ENCODE measurements at regions of chr19 and their contacts with region 1.

Region 1: DNA sequence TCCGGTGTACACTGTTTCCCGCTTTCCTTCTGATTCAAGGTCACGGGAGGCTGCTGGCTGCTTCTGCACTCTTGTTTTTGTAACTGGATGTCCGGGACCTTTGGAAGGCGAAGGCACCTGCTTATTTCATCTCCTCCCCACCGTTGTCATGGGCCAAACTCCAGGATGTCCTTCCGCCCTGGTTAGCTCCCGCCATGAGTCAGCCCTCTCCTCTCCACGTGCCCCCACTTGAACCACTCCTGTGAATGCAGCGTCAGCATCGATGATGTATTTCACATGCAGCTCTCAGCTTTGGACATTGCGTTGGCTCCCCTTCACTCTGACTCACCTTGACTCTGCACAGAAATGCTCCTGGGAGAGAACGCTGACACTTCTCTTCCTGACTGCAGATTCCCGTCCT is 5.5 kb upstream of the GALP start:
- DNase-seq: no peak
- ATAC-seq: no peak
- H3K4me3 ChIP-seq: no peak overlapping the region
- H3K4me3 Mint-ChIP-seq: no peak overlapping the region
- H3K27ac ChIP-seq: no peak overlapping the region
- H3K27ac Mint-ChIP-seq: no peak overlapping the region
- H3K4me1 ChIP-seq: peaks cover 5% of the 10 kb centered on the region
- H3K4me1 Mint-ChIP-seq: peaks cover 0 to 6% of the 10 kb centered on the region in 2 donors
- H3K27me3 ChIP-seq: no peaks in the 10 kb centered on the region
- H3K27me3 Mint-ChIP-seq: peaks cover 4 to 6% of the 10 kb centered on the region in 2 donors
- CTCF ChIP-seq: no peak

Region 2: DNA sequence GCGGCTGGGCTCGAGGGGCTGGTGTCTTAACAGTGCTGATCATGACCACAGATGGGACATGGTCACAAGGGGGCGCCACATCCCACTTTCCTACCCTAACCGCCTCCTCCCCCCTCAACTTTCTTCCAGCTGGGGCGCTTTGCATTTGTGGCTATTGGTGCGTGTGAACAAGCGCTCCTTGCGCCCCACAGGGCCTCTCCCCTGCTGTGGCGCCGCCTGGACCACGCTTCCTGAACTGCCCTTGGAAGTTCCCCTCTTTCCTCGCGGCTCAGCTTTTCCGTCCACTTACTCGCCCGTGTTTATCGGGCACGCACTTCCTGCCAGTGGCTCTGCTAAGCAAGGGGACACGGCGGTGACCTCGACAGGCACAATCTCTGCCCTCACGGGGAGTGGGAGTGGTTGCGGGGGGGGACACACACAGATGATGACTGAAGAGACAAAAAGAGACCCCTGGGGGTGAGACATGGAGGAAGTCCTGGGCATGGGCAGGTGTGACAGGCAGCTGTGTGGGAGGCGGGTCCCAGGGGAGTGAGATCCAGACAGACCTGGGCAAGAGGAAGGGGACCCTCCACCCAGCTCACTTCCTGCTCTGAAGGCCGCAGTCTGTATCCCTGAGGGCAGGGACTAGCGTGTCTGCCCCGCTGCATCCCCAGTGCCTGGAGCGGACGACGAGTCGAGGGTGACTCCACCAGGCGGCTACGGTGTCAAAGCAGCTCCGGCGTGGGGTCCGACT is 89.4 kb before region 1 on chr19:
- intact Hi-C with region 1: loop called (anchors 2 kb)
- DNase-seq: peak; percentile 58 to 81
- ATAC-seq: peak; percentile 70 to 80 (median 77)
- H3K4me3 ChIP-seq: peak overlapping the region; percentile 41
- H3K4me3 Mint-ChIP-seq: peak overlapping the region; percentile 79
- H3K27ac ChIP-seq: no peak overlapping the region
- H3K27ac Mint-ChIP-seq: peak overlapping the region in 1 of 2 donors; percentile 86
- H3K4me1 ChIP-seq: peaks cover 12% of the 10 kb centered on the region
- H3K4me1 Mint-ChIP-seq: peaks cover 10 to 12% of the 10 kb centered on the region in 2 donors
- H3K27me3 ChIP-seq: no peaks in the 10 kb centered on the region
- H3K27me3 Mint-ChIP-seq: peaks cover 0 to 5% of the 10 kb centered on the region in 2 donors
- CTCF ChIP-seq: peak; percentile 19

Region 3: GRCh38 chr19:56105090-56105701 is 65.1 kb before region 1 on chr19:
- intact Hi-C with region 1: loop called (anchors 10 kb)
- DNase-seq: peak; percentile 40 to 74
- ATAC-seq: peak; percentile 70 to 86 (median 82)
- H3K4me3 ChIP-seq: no peak overlapping the region
- H3K4me3 Mint-ChIP-seq: peak overlapping the region; percentile 6
- H3K27ac ChIP-seq: no peak overlapping the region
- H3K27ac Mint-ChIP-seq: peak overlapping the region; percentile 53 to 75
- H3K4me1 ChIP-seq: peaks cover 45% of the 10 kb centered on the region
- H3K4me1 Mint-ChIP-seq: peaks cover 21 to 51% of the 10 kb centered on the region in 2 donors
- H3K27me3 ChIP-seq: no peaks in the 10 kb centered on the region
- H3K27me3 Mint-ChIP-seq: no peaks in the 10 kb centered on the region
- CTCF ChIP-seq: peak; percentile 68

Region 4: DNA sequence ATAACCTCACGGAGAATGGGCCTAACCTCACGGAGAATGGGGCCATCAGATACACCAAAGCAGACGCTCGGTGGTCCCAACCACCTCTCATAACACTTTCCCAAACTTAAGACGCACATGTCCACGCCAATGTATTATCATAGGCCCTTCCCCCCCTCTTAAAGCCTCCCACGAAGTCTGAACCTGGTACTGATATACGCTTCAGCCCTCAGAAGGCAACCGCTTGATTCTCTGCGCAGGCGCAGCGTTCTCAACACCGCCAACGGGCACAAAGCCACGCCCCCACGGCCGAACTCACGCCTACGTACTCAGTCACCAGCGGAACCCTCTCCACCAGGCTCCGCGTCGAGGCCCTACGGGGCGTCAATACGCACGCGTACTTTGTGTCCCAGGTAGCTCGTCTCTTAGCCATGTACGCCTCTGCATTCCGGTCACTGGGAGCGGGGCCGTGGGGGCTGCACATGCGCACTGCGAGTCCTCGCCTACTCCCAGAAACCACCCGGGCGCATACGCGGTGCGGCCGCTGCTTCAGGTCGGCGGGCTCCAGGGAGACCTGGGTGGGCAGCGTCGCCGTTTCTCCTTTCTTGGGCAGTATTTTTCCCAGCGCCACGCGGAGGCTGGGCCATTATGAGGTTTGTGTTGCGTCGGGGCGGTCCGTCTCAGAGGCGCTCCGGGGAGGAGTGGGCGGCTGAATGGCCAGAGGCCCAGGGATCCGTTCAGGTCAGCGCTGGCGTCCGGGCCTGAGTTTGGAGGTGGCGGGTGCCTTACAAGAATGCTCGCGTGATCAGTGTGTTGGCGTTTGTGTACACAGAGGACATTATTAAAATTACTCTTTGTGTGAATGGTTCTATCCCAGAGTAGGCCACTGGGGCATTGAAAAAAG is 197.8 kb after region 1 on chr19:
- intact Hi-C with region 1: no loop called
- DNase-seq: peak; percentile 84 to 87
- ATAC-seq: peak; percentile 92 to 94 (median 93)
- H3K4me3 ChIP-seq: peak overlapping the region; percentile 64
- H3K4me3 Mint-ChIP-seq: peak overlapping the region; percentile 96
- H3K27ac ChIP-seq: peak overlapping the region; percentile 73
- H3K27ac Mint-ChIP-seq: peak overlapping the region; percentile 92 to 98
- H3K4me1 ChIP-seq: peaks cover 9% of the 10 kb centered on the region
- H3K4me1 Mint-ChIP-seq: peaks cover 26 to 29% of the 10 kb centered on the region in 2 donors
- H3K27me3 ChIP-seq: no peaks in the 10 kb centered on the region
- H3K27me3 Mint-ChIP-seq: no peaks in the 10 kb centered on the region
- CTCF ChIP-seq: peak; percentile 11